Aorta (tissue), 5 donors: ENCODE measurements at regions of chr11 and their contacts with region 1.

Region 1: DNA sequence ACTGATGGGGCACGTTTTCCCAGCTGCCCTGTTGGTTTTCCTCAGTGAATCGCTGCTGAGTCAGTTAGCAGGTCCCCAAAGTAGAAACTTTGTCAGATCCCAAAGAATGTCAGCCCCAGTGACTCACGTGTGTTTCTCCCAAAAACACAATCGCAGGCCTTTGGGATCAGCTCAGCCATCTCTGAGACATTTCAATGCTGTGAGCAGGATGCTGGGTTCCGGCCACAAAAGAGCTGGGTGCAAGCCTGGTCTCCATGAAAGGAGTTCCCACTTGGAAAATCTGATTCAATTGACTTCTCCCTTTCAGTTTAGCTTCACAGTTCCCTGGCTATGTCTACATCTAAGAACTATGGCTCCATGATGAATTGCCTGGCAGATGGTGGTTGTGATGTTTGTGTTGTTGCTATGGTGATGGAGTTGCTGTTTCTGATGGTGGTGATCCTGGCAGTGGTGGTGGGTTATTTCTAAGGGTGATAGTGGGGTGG is 28.0 kb downstream of the MYEOV start:
- DNase-seq: peak in 1 of 2 donors; percentile 85
- ATAC-seq: peak; percentile 80
- H3K4me3 ChIP-seq: no peak overlapping the region
- H3K27ac ChIP-seq: peak overlapping the region; percentile 79 to 94
- H3K4me1 ChIP-seq: peaks cover 0 to 11% of the 10 kb centered on the region in 2 donors
- H3K27me3 ChIP-seq: no peaks in the 10 kb centered on the region

Region 2: DNA sequence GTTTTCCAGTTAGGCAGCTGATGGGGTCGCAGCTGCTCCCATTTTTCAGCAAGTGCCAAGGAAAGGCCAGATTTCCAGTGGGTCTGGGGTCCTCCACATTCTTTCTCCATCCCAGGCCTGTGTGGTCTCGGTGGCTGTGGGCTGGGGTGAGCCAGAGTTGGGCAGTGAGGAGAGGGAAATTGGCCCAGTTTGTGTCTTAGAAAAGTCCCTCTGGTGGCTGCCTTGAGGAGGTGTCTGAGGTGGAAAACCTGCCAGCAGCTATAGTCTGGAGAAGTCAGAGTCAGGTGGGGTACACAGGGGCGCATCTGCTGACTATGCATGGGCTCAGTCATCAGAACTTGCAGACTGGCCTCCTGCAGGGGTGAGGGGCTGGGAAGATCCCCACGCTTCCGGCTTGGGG is 371.7 kb before region 1 on chr11:
- intact Hi-C with region 1: no loop called
- DNase-seq: no peak
- ATAC-seq: no peak
- H3K4me3 ChIP-seq: no peak overlapping the region
- H3K27ac ChIP-seq: no peak overlapping the region
- H3K4me1 ChIP-seq: no peaks in the 10 kb centered on the region
- H3K27me3 ChIP-seq: no peaks in the 10 kb centered on the region

Region 3: GRCh38 chr11:69296890-69297786 is 24.8 kb before region 1 on chr11:
- intact Hi-C with region 1: loop called (anchors 2 kb)
- DNase-seq: peak; percentile 98 to 99
- ATAC-seq: peak; percentile 87
- H3K4me3 ChIP-seq: no peak overlapping the region
- H3K27ac ChIP-seq: peak overlapping the region; percentile 34 to 84
- H3K4me1 ChIP-seq: no peaks in the 10 kb centered on the region
- H3K27me3 ChIP-seq: no peaks in the 10 kb centered on the region

Region 4: GRCh38 chr11:69409812-69410540 is 88.1 kb after region 1 on chr11:
- intact Hi-C with region 1: loop called (anchors 5 to 10 kb)
- DNase-seq: peak in 1 of 2 donors; percentile 44
- ATAC-seq: no peak
- H3K4me3 ChIP-seq: no peak overlapping the region
- H3K27ac ChIP-seq: no peak overlapping the region
- H3K4me1 ChIP-seq: no peaks in the 10 kb centered on the region
- H3K27me3 ChIP-seq: no peaks in the 10 kb centered on the region

Region 5: DNA sequence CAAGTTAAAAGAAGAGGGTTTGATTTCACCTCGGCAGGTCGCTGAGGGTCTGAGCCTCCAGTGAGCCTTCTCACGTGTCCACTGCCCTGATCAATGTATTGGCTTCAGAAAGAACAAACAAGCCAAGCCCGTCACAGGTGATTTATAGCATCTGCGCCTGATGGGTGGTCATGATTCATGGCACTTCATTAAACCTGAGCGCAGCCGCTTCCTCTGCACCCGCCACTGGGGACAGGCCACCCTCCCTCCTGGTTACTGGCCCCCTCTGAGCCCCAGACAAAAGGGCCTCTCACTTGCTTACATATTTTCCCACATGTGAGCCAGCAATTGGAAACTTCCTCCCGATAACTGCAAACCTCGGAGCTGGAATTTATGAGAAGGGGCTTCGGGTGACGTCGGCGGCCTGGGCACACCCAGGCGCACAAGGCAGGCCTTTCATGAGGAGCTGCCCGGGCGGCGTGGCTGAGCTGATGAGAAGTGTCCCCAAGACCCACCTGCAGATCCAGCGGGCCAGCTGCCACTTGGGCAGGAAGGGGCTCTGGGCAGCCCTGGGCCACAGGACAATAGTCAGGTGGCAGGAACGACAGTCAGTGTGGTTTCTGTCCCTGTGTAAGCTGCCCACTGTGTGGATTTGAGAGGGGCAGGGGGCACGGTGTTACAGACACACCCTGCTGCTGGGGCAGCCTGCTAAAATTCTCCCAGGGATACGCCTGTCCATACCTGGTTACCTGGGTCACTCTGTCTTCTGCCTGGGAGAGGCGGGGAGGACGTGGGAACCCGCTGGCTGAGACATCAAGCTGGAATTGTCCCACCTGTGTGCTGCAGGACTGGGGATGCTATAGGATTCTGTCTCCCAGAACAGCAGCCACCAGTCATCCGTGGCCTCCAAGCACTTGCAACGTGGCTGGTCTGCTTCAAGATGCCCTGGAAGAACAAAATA is 95.5 kb after region 1 on chr11:
- intact Hi-C with region 1: loop called (anchors 5 to 10 kb)
- DNase-seq: peak in 1 of 2 donors; percentile 73
- ATAC-seq: no peak
- H3K4me3 ChIP-seq: no peak overlapping the region
- H3K27ac ChIP-seq: peak overlapping the region in 1 of 2 donors; percentile 53
- H3K4me1 ChIP-seq: no peaks in the 10 kb centered on the region
- H3K27me3 ChIP-seq: no peaks in the 10 kb centered on the region

Region 6: DNA sequence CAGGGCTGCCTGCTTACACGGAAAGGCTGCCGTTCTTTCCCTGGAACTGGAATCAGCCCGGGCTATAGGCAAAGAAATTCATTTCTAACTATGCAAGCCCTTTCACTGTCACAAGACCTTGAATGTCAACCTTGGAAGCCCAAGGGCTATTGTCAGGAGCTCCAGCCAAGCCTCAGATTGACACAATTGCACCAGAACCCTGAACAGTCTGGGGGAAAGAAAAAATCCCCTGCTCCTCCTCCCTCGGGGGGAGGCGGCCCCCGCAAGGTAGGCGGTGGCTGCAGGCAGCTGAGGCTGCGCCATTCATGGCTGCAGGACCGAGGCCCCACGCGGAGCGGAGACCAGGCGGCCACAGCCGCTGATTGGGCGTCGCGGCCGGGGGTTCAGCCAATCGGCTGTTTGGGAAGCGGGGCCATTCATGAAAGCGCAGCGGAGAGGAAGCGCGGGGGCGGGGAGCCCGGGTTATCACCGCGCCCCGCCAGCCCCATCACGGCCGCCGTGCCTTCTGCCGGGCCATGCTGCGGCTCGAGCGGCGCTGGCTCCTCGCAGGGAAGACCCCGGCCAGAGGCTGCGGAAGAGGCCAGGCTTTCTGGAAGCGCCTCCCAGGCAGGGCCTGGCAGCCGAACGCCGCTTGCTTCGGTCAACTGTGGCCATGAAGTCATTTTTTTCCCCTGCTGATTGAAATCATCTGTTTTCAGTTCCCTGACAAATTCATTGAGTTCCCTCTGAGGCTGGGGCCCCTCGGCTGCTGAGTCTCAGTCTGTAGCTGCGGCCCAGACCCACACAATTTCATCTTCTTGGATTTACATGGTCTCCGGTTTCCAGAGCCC is 121.4 kb after region 1 on chr11:
- intact Hi-C with region 1: loop called in 1 of 2 experiments (anchors 10 kb)
- DNase-seq: peak; percentile 95 to 97
- ATAC-seq: peak; percentile 92
- H3K4me3 ChIP-seq: peak overlapping the region in 1 of 2 donors; percentile 32
- H3K27ac ChIP-seq: peak overlapping the region in 1 of 2 donors; percentile 28
- H3K4me1 ChIP-seq: no peaks in the 10 kb centered on the region
- H3K27me3 ChIP-seq: no peaks in the 10 kb centered on the region

Region 7: GRCh38 chr11:69471329-69472052 is 149.6 kb after region 1 on chr11:
- intact Hi-C with region 1: no loop called
- DNase-seq: peak; percentile 21 to 75
- ATAC-seq: no peak
- H3K4me3 ChIP-seq: no peak overlapping the region
- H3K27ac ChIP-seq: no peak overlapping the region
- H3K4me1 ChIP-seq: no peaks in the 10 kb centered on the region
- H3K27me3 ChIP-seq: no peaks in the 10 kb centered on the region